ENCODE measurements at regions of chr6 and their contacts with region 1.

Region 1: DNA sequence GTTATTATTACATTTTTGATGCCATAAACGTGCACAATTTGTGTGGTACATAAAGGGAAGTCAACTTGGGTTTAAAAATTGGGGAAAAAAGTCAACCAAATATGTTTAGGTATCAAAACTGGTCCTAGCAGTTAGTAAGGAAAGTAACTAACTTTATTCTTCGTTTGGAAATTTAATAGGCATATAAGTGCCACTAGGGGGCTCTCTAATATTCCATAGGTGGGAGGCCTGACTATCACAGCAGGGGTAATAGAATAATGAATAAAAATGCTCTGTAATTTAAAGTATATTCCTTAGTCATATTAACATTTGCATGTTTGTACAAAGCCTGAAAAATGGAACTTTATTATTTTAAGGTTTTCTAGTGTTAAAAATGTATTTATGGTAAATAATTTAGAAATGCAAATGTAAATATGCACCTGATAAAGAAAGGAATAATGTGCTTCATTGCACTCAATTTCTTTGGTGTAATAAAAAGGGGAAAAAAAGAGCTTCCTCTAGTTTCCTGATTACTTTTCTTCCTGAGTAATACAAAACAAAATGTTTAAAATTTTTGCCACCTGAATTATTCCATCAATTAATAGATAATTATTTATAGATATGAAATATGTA is 125.7 kb upstream of the HDAC2 start:
- DNase-seq: no peak

Region 2: GRCh38 chr6:114342826-114343780 is 246.4 kb after region 1 on chr6 and contains the start of gene HS3ST5:
- intact Hi-C with region 1: loop called (anchors 5 kb)
- DNase-seq: peak; percentile 57 to 96 (median 72)